Activated CD4-positive, alpha-beta memory T cell treated with anti-CD3 and anti-CD28 coated beads for 36 hours (primary cell): ENCODE measurements at regions of chr2 and their contacts with region 1.

Region 1: DNA sequence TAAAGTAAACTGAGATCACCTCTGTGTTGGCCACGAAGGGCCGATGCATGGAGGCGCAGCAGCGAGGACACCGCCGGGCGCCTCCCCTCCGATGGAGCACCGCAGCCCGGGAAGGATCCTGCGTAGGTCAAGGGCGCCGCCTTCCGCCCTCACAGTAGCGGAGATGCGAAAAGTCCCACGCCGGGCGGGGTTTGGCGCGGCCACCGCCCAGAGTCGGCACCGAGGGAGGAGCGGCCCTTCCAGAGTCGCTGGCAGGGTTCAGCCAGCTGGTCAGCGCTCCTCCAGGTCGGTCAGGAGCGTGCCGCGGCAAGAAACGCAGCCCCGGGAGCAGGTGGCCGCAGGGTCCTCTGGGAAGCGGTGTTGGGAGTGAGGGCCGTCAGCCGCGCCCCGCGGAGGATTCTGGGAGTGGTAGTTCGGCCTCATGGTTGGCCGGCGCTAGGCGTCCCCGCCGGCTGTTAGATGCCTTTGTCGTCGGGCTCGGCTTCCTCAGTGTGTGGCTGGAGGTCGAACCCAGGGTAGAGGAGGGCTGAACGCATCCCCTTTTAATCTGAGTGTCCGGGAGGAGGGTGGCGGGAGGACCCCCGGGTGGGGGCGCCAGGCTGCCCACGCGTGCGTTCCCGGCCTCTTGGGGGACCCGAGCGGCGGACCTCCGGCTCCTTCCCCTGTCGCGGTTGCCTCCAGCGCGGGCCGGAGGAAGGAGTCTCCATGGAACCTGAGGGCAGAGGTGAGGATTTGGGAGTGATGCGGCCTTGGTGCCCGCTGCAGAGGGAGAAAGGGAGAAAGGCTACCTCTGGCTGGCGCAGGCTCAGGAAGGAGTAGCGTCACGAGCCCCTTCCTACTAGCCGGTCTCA is at the start of gene ZNF892:
- DNase-seq: peak; percentile 88
- H3K4me3 Mint-ChIP-seq: peak within 1 kb of the TSS; percentile 89
- H3K27ac Mint-ChIP-seq: peak within 1 kb of the TSS; percentile 30
- H3K4me1 Mint-ChIP-seq: peaks cover 15% of the 10 kb centered on the region
- H3K27me3 Mint-ChIP-seq: no peaks in the 10 kb centered on the region
- total RNA-seq, gene ZNF892: 2.7 to 3.3 TPM

Region 2: GRCh38 chr2:94874277-94875008 is 332.9 kb before region 1 on chr2:
- CTCF ChIA-PET with region 1: no interaction called
- POLR2A ChIA-PET with region 1: no interaction called
- intact Hi-C with region 1: no loop called
- DNase-seq: peak; percentile 77
- H3K4me3 Mint-ChIP-seq: no peak overlapping the region
- H3K27ac Mint-ChIP-seq: no peak overlapping the region
- H3K4me1 Mint-ChIP-seq: no peaks in the 10 kb centered on the region
- H3K27me3 Mint-ChIP-seq: peaks cover 6% of the 10 kb centered on the region

Region 3: DNA sequence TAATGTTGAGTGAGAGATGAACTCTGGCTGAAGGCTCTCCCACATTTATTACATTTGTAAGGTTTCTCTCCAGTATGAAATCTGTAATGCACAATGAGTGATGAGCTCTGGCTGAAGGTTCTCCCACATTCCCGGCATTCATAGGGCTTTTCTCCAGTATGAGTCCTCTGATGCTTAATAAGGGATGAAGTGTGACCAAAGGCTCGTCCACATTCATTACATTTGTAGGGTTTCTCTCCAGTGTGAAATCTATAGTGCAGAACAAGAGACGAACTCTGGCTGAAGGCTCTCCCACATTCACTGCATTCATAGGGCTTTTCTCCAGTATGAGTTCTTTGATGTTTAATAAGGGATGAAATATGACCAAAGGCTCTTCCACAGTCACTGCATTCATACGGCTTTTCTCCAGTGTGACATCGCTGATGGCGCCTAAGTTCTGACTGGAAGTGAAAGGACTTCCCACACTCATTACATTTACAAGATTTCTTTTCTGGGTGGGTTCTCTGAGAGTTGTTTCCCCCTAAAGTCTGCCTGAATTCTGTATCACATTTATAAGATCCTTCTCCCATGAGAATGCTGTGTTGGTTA is 57.8 kb before region 1 on chr2:
- CTCF ChIA-PET with region 1: no interaction called
- POLR2A ChIA-PET with region 1: no interaction called
- intact Hi-C with region 1: no loop called
- DNase-seq: no peak
- H3K4me3 Mint-ChIP-seq: no peak overlapping the region
- H3K27ac Mint-ChIP-seq: no peak overlapping the region
- H3K4me1 Mint-ChIP-seq: no peaks in the 10 kb centered on the region
- H3K27me3 Mint-ChIP-seq: no peaks in the 10 kb centered on the region

Region 4: DNA sequence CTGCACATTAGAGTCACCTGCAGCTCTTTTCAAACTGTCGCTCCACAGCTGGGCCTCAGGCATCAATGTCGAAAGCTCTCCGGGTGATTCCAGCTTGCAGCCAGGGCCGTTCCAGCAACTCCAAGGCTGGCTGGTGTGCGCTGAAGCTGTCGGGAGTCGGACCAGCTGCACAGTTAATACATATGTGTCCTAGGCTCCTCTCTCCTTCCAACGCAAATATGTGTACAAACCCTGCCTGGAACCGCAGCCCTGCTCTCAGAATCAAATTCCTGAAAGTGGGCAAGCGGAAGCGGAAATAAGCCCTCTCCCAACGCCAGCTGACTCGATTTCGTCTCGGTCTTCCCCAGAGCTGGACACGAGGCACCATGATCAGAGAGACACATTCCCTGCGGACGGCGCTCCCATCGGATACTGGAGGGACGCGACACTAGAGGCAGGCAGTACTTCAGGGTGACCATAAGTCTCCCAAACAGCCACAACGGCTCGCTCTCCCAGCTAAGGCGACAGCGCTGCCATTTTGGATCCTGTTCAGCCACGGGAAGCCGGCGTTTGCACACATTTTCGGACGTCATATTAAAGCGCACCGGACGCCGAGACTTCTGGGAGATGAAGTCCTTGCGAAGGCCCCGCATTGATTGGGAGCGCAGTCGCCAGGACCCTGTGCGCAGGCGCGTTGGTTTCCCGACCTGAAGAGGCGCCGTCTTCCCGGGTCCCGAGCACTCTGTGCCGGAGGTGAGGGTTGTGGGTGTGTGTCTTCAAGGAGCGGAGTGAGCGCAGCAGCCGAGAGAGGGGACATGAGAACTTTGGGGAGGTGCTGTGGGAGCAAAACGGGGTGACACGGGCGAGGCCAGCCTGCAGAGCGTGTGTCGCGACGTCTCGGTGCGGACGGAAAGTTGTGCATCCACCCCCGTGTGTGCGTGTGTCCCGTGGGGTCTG is 41.9 kb before region 1 on chr2 and contains the start of gene ZNF2:
- CTCF ChIA-PET with region 1: no interaction called
- POLR2A ChIA-PET with region 1: no interaction called
- intact Hi-C with region 1: loop called (anchors 1 kb)
- DNase-seq: peak; percentile 98
- H3K4me3 Mint-ChIP-seq: peak within 1 kb of the TSS; percentile 100
- H3K27ac Mint-ChIP-seq: peak within 1 kb of the TSS; percentile 93
- H3K4me1 Mint-ChIP-seq: peaks cover 34% of the 10 kb centered on the region
- H3K27me3 Mint-ChIP-seq: no peaks in the 10 kb centered on the region
- total RNA-seq, gene ZNF2: 3.9 to 4.4 TPM